PC-3 (cell line): ENCODE measurements at regions of chr10 and their contacts with region 1.

Region 1: DNA sequence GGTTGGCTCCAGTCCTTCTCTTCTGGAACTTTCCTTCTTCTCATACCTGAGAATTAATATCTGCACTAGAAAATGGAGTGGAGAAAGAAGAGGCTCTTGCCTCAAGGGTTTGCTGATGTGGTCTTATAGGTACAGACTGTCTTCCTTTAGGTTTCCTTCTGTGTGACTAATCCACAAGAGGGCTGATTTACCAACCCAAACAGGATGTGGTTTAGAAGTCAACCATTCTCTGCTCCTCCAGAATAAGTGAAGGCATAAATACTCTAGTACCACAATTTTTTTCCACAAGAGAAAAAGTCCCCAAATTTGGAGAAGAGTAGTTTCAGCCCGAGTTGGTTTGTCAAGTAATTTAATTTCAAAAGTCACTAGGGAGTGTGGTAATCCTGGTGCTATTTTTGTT is 85.8 kb downstream of the NRP1 start:
- DNase-seq: peak; percentile 100
- ATAC-seq: peak; percentile 43
- H3K4me3 ChIP-seq: no peak overlapping the region
- H3K27ac ChIP-seq: peak overlapping the region; percentile 65
- H3K4me1 ChIP-seq: peaks cover 52% of the 10 kb centered on the region
- H3K27me3 ChIP-seq: no peaks in the 10 kb centered on the region
- CTCF ChIP-seq: no peak

Region 2: GRCh38 chr10:33025039-33025438 is 223.6 kb before region 1 on chr10:
- CTCF ChIA-PET with region 1: no interaction called
- POLR2A ChIA-PET with region 1: no interaction called
- intact Hi-C with region 1: no loop called
- DNase-seq: no peak
- ATAC-seq: no peak
- H3K4me3 ChIP-seq: no peak overlapping the region
- H3K27ac ChIP-seq: no peak overlapping the region
- H3K4me1 ChIP-seq: no peaks in the 10 kb centered on the region
- H3K27me3 ChIP-seq: no peaks in the 10 kb centered on the region
- CTCF ChIP-seq: no peak

Region 3: DNA sequence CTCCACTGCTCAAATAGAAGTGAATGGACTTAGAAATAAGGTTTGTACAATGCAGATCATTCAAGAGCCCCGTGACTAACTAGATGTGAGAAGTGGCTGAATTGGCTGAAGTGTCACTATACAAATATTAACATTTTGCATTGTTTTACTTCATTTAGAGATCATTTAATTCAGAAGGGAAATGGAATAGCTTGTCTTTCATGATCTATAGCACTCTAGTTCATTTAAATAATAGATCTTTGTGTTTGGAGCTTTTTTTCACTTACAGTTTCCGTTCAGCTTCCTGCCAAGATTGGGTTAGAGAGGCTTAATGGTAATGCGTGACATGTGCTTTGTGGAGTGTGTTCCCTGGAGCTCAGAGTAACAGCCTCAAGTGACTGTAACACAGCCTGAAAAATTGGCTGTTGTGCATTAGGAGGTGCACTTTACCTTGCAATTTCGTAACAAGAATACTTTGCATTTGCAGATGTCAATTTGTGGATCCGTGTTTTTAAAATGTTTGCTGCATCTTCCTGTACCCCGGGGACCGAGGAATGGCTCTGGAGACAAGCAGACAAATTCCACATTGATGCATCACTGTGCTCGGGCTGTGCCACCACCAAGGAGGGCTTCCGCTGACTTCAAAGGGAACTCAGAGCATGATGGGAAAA is 84.5 kb before region 1 on chr10:
- CTCF ChIA-PET with region 1: no interaction called
- POLR2A ChIA-PET with region 1: interaction called, 3 read pairs
- intact Hi-C with region 1: loop called (anchors 1 kb)
- DNase-seq: peak; percentile 94
- ATAC-seq: peak; percentile 88
- H3K4me3 ChIP-seq: peak overlapping the region; percentile 0; the same call in 1 of the 2 replicates
- H3K27ac ChIP-seq: peak overlapping the region; percentile 44
- H3K4me1 ChIP-seq: peaks cover 19% of the 10 kb centered on the region
- H3K27me3 ChIP-seq: no peaks in the 10 kb centered on the region
- CTCF ChIP-seq: no peak

Region 4: DNA sequence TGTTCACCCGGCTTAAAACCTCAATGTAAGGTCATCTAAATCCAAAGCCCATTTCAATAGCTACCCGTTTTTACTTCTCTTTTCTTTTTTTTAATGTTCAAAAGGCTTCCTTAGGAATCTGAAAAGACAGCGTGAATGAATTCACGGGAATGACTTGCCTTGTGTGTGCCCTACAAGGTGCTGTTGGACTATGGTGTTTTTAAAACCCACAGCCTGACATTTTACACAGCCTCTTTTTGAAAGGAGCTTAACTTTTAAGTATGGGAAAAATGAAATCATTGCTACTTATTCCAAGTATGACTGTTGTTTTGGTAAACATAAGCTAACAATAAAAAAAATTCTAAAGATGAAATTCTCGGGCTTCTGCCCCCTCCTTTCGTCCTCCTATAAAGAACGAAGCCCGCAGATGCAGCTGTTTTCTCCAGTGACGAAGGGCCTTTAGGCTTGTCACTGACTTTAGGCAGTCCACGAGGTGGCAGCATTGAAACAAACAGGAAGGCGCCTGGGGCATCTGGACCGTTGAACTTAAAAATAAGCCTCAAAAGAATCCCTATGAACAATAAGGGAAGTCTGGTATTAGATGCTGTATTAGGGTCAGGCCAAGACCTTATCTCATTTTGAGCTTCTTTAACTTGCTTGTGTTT is 55.5 kb before region 1 on chr10:
- CTCF ChIA-PET with region 1: interaction called, 31 read pairs
- POLR2A ChIA-PET with region 1: interaction called, 6 read pairs
- intact Hi-C with region 1: loop called (anchors 1 kb)
- DNase-seq: peak; percentile 100
- ATAC-seq: peak; percentile 74
- H3K4me3 ChIP-seq: no peak overlapping the region
- H3K27ac ChIP-seq: peak overlapping the region; percentile 72
- H3K4me1 ChIP-seq: peaks cover 54% of the 10 kb centered on the region
- H3K27me3 ChIP-seq: no peaks in the 10 kb centered on the region
- CTCF ChIP-seq: no peak

Region 5: DNA sequence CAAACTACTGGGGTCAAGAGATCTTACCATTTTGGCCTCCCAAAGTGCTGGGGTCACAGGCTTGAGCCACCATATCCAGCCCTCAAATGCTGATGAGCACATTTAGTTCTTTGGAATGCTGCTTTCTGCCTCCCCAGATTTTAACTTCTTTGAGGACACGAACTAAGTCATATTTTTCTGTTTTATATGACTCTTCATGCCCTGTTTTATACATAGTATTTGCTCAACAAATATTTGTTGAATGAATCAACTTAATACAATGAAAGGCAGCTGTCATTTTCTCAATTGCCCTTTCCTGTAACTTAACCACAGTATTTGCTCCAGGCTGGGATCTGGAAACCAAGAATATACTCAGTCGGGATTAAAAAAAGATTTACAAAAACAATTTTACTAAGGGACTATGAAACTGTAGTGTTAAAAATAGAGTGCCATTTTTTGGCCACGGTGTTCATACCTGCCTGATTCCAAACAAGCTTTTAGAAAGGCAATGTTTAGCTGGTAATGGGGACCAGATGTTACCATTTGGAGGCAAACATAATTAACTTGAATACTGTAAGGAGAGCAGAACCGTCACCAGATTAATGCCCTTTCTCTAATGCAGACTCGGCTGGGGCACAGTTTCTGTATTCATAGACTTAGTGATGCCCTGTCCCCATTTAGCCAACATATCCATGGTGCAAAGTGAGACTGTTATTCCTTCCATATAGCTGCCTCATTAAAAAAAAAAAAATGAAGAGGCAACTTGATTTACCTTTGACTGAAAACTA is 31.8 kb before region 1 on chr10:
- CTCF ChIA-PET with region 1: no interaction called
- POLR2A ChIA-PET with region 1: interaction called, 11 read pairs
- intact Hi-C with region 1: loop called (anchors 1 kb)
- DNase-seq: peak; percentile 100
- ATAC-seq: peak; percentile 91
- H3K4me3 ChIP-seq: peak overlapping the region; percentile 6; the same call in 1 of the 2 replicates
- H3K27ac ChIP-seq: peak overlapping the region; percentile 65
- H3K4me1 ChIP-seq: peaks cover 46% of the 10 kb centered on the region
- H3K27me3 ChIP-seq: no peaks in the 10 kb centered on the region
- CTCF ChIP-seq: no peak

Region 6: DNA sequence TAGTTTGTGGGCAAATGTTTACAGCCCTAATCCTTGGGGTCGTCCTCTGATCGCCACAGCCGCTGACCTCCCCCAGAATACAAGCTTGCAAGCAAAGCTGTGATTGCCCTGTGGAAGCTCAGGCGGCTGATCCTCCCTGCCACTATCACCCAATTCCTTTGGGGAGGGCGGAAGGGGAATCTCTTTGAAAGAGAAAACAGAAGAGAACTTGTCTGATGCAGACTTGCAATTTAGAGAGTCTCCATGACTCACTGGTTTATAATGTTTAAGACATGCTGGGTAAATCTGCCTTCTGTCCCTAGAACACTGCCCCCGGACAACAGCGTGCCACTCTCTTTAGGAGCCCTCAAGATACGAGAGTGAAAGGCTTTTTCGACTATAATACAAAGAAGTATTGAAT is 10.3 kb after region 1 on chr10:
- CTCF ChIA-PET with region 1: interaction called, 3 read pairs
- POLR2A ChIA-PET with region 1: interaction called, 4 read pairs
- intact Hi-C with region 1: loop called (anchors 1 kb)
- DNase-seq: peak; percentile 98
- ATAC-seq: peak; percentile 52
- H3K4me3 ChIP-seq: no peak overlapping the region
- H3K27ac ChIP-seq: peak overlapping the region; percentile 65
- H3K4me1 ChIP-seq: peaks cover 86% of the 10 kb centered on the region
- H3K27me3 ChIP-seq: no peaks in the 10 kb centered on the region
- CTCF ChIP-seq: no peak

Region 7: DNA sequence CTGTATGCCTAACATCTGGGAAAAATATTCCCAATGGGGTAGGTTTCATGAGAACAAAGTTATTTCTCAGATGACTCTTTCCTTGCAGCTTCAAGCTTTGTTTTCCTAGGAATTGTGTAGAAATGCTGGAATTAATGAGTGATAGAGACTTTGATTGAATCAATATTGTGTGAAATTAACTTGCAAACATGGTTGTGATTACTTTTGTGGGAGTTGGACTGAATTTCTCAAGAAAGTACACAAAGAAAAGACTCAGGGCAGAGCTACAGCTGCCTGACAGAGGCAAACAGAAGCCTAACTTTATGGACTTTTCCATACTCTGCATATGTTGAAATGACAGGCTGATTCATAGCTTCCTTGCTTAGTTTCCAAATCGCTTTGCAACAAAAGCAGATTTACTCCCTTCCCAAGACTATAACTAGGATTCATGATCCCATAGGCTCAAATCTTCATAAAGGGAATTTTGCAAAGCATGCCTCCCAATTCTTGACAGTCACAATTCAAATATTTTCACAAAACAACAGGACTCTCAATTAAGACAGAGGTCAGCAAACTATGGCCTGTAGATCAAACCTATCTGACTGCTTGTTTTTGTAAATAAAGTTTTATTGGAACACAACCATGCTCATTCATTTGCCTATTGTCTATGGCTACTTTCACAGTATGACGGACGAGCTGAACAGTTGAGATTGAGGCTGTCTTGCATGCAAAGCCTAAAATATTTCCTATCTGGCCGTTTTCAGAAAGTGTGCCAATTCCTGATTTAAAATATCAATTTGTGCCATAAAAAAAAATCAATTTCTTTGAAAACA is 58.3 kb after region 1 on chr10:
- CTCF ChIA-PET with region 1: no interaction called
- POLR2A ChIA-PET with region 1: interaction called, 21 read pairs
- intact Hi-C with region 1: loop called (anchors 2 kb)
- DNase-seq: peak; percentile 86
- ATAC-seq: peak; percentile 59
- H3K4me3 ChIP-seq: no peak overlapping the region
- H3K27ac ChIP-seq: peak overlapping the region; percentile 52
- H3K4me1 ChIP-seq: peaks cover 21% of the 10 kb centered on the region
- H3K27me3 ChIP-seq: no peaks in the 10 kb centered on the region
- CTCF ChIP-seq: no peak

Region 8: GRCh38 chr10:33365871-33366411 is 117.3 kb after region 1 on chr10:
- CTCF ChIA-PET with region 1: no interaction called
- POLR2A ChIA-PET with region 1: no interaction called
- intact Hi-C with region 1: no loop called
- DNase-seq: peak; percentile 100
- ATAC-seq: peak; percentile 90
- H3K4me3 ChIP-seq: peak overlapping the region; percentile 9; the same call in 1 of the 2 replicates
- H3K27ac ChIP-seq: peak overlapping the region; percentile 82
- H3K4me1 ChIP-seq: peaks cover 53% of the 10 kb centered on the region
- H3K27me3 ChIP-seq: no peaks in the 10 kb centered on the region
- CTCF ChIP-seq: no peak